ENCODE measurements at regions of chr10 and their contacts with region 1.

Region 1: DNA sequence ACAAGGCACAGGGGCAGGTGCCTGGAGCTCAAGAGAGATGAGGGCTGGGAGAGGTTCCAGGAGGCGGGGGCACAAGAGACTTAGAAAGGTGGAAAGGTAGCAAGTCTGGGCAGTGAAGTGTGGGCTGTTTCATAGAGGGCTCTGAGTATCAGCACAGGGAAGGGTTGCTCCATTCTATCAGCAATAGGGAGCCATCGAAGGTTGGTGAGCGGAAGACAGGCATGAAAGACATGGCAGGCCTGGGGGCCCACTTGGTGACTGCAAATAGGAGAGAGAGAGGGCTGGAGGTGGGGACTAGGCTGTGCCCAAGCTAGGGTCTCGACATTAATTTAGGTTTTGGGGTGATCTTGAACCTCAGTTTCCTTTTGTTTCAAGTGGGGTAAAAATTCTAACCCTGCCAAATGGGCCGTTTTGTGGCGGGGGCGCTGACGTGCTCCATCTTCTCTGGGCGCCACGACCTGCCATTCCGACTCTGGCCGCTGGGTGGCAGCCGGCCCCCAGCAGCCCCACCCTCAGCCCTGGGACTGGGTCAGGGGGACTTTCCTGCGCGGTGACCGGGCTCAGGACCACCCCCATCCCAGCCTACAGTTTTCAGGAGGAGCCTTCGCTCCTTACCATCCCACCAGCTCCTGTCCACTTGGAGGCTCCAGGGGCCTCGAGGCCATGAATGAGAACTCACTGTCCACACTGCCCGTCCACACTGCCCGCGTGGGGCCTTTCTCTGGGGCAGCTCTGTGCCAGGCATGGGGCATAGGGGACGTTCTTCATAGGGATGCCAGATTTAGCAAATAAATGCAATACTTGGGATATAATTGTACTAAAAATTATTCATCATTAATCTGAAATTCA is 37.2 kb upstream of the PCBD1 start:
- DNase-seq: peak in 2 of 3 donors; percentile 67 to 68
- ATAC-seq: peak; percentile 72
- H3K4me3 ChIP-seq: no peak overlapping the region
- H3K4me1 ChIP-seq: no peaks in the 10 kb centered on the region
- CTCF ChIP-seq: peak; percentile 93

Region 2: DNA sequence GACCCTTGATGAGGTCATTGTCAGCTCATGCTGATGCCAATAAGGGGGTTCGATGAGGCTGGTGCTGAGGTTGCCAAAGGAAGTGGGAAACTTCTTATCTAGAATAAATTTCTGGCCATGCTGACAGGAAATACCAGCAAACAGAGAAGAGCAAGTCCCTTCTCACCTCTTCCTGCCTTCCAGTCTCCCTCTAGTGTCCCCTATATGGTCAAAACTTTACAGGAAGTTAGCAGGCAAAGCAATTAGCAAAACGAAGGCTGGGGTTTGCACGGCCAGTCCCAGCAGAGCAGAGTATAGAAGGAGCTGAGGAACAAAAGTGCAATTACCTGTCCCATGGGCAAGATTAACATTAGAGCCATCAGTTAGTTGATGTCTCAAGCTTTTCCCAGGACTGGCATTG is 1337.2 kb before region 1 on chr10:
- intact Hi-C with region 1: no loop called
- DNase-seq: no peak
- ATAC-seq: no peak
- H3K4me3 ChIP-seq: no peak overlapping the region
- H3K4me1 ChIP-seq: no peaks in the 10 kb centered on the region
- CTCF ChIP-seq: no peak

Region 3: DNA sequence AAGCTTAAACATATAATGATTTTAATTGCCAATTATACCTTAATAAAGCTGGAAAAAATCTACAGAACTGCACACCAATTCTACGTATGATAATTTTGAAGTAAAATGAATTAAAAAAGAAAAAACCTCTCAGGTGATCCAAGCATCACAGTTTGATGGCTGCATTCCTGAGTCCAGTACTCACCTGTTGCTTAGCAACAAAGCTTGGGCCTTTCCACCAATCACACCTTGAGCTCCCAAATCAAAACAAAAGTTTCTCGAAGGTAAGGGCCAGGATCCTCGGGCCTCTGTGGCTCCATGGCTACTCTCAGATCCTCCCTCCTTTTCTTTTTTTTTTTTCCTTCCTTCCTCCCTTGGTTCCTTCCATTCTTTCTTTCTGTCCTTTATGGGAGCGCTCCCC is 99.9 kb after region 1 on chr10:
- intact Hi-C with region 1: no loop called
- DNase-seq: no peak
- ATAC-seq: no peak
- H3K4me3 ChIP-seq: no peak overlapping the region
- H3K4me1 ChIP-seq: no peaks in the 10 kb centered on the region
- CTCF ChIP-seq: no peak

Region 4: DNA sequence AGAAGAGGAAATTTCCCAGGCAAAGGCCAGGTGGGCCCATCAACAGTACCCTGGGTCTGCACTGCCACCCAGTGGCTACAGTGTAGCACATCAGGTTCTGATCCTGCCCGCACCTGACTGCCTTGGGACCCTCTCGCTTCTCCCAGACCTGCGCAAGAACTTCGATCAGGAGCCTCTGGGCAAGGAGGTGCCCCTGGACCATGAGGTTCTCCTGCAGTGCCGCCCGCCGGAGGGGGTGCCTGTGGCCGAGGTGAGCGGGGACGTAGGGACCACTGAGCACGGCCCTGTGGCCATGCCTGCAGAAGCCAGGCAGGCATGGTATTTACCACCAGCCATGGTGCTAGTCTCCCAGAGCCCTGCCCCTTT is 359.6 kb after region 1 on chr10:
- intact Hi-C with region 1: loop called in 1 of 2 experiments (anchors 10 kb)
- DNase-seq: peak in 2 of 3 donors; percentile 39 to 54
- ATAC-seq: peak; percentile 68
- H3K4me3 ChIP-seq: no peak overlapping the region
- H3K4me1 ChIP-seq: no peaks in the 10 kb centered on the region
- CTCF ChIP-seq: peak; percentile 46

Measured in mucosa of descending colon (tissue), 3 donors.